Heart left ventricle (tissue), 16 donors: ENCODE measurements at regions of chr15 and their contacts with region 1.

Region 1: GRCh38 chr15:69755551-69756310 is 303.1 kb downstream of the RPLP1 start:
- DNase-seq: peak in 2 of 5 donors; percentile 38 to 67
- ATAC-seq: no peak
- H3K4me3 ChIP-seq: no peak overlapping the region
- H3K27ac ChIP-seq: peak overlapping the region in 1 of 12 donors; percentile 17
- H3K4me1 ChIP-seq: peaks cover 0 to 65% (median 0%) of the 10 kb centered on the region in 12 donors
- H3K27me3 ChIP-seq: peaks cover 0 to 4% (median 0%) of the 10 kb centered on the region in 9 donors
- CTCF ChIP-seq: no peak
- POLR2A ChIP-seq: no peak

Region 2: DNA sequence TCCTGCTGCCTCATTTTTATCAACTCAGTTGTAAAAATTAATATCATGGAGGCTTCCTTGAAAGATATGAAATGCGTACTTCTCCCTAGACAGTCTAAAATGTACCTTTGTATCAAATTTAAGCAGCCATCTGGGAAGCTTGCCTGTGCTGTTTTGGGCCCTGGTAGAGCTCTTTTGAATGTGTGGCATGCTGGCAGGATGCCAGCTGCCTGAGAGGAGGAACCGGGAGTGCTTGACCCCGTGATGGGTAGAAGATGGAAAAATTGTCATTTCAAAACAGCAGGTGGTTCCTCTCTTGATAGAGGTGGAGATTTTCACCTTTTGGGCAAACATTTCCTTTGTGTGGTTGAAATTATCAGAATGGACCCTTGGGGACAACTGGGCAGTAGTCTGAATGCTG is 57.8 kb before region 1 on chr15:
- intact Hi-C with region 1: loop called in 1 of 10 experiments (anchors 10 kb)
- DNase-seq: peak; percentile 25 to 73 (median 31)
- ATAC-seq: peak in 2 of 4 donors; percentile 47 to 48
- H3K4me3 ChIP-seq: no peak overlapping the region
- H3K27ac ChIP-seq: no peak overlapping the region
- H3K4me1 ChIP-seq: peaks cover 0 to 5% (median 0%) of the 10 kb centered on the region in 12 donors
- H3K27me3 ChIP-seq: no peaks in the 10 kb centered on the region
- CTCF ChIP-seq: no peak
- POLR2A ChIP-seq: no peak

Region 3: DNA sequence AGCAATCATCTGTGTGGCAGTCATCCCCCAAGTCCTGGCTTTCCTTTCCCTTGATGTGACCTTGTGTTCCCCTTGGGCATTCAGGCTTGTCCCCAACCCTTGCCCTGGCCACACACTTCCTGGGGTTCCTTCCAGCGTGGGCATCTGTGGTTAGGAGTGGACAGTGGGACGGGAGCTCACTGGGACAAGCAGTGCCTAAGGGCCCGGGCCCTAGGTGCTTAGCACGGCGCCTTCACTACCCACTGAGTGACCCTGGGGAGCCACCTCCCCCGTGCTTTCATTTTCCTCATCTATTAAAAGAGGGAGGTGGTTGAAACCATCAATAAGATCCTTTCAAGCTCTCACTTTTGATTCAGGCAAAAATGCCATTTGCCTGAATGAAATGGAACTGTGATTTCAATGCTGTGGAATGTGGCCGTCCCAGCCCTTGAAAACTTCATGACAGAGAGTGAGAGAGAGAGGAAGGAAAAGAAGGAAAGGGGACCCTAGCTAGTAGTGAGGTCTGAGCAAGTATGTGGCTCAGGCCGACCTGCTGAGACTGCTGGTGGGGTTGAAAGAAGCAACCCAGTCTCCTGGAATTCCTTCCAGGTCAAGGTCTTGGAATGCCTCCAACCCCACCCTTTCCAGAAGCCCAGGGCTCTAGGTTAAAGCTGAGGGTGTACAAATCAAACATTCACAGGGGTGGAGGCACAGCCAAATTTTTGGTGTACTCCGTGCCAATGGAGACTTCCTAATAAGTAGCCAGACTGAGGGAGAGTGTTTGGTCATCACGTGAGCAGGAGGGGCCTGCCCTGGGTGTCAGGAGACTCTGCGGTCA is 39.1 kb after region 1 on chr15:
- intact Hi-C with region 1: no loop called
- DNase-seq: peak in 1 of 5 donors; percentile 38
- ATAC-seq: peak; percentile 51 to 77 (median 73)
- H3K4me3 ChIP-seq: no peak overlapping the region
- H3K27ac ChIP-seq: peak overlapping the region; percentile 12 to 82 (median 58)
- H3K4me1 ChIP-seq: peaks cover 0 to 28% (median 13%) of the 10 kb centered on the region in 12 donors
- H3K27me3 ChIP-seq: peaks cover 0 to under 1% (median 0%) of the 10 kb centered on the region in 9 donors
- CTCF ChIP-seq: no peak
- POLR2A ChIP-seq: no peak

Region 4: GRCh38 chr15:69853581-69853980 is 97.8 kb after region 1 on chr15:
- intact Hi-C with region 1: no loop called
- DNase-seq: no peak
- ATAC-seq: no peak
- H3K4me3 ChIP-seq: no peak overlapping the region
- H3K27ac ChIP-seq: no peak overlapping the region
- H3K4me1 ChIP-seq: no peaks in the 10 kb centered on the region
- H3K27me3 ChIP-seq: peaks cover 0 to 21% (median 0%) of the 10 kb centered on the region in 9 donors
- CTCF ChIP-seq: no peak
- POLR2A ChIP-seq: no peak

Region 5: GRCh38 chr15:69881766-69882165 is 126.0 kb after region 1 on chr15:
- intact Hi-C with region 1: loop called in 1 of 10 experiments (anchors 10 kb)
- DNase-seq: no peak
- ATAC-seq: no peak
- H3K4me3 ChIP-seq: no peak overlapping the region
- H3K27ac ChIP-seq: no peak overlapping the region
- H3K4me1 ChIP-seq: no peaks in the 10 kb centered on the region
- H3K27me3 ChIP-seq: peaks cover 0 to 46% (median 6%) of the 10 kb centered on the region in 9 donors
- CTCF ChIP-seq: no peak
- POLR2A ChIP-seq: no peak